ENCODE measurements at regions of chr2 and their contacts with region 1.

Region 1: GRCh38 chr2:231674587-231675338 is 33.6 kb upstream of the PTMA start:
- DNase-seq: no peak
- H3K4me3 ChIP-seq: no peak overlapping the region
- CTCF ChIP-seq: peak; percentile 92

Region 2: DNA sequence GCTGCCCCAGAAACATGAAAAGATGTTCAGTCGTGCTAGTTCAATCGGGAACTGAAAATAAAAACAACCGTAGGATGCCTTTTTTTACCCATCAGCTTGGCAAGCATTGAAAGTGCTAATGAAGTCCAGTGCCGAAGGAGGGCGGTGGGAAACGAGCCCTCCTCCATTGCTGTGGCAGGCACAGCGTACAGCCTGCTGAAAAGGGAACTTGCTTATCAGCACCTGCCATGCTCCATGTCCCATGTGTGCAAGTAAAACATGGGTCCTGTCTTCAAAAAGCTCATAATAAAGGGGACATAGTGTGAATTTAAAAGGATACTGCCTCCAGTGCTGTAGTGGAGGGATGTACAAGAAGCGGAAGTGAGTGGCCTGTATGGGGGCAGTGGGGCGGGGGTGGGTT is 393.9 kb before region 1 on chr2:
- CTCF ChIA-PET with region 1: no interaction called
- POLR2A ChIA-PET with region 1: no interaction called
- DNase-seq: no peak
- H3K4me3 ChIP-seq: no peak overlapping the region
- CTCF ChIP-seq: no peak

Region 3: DNA sequence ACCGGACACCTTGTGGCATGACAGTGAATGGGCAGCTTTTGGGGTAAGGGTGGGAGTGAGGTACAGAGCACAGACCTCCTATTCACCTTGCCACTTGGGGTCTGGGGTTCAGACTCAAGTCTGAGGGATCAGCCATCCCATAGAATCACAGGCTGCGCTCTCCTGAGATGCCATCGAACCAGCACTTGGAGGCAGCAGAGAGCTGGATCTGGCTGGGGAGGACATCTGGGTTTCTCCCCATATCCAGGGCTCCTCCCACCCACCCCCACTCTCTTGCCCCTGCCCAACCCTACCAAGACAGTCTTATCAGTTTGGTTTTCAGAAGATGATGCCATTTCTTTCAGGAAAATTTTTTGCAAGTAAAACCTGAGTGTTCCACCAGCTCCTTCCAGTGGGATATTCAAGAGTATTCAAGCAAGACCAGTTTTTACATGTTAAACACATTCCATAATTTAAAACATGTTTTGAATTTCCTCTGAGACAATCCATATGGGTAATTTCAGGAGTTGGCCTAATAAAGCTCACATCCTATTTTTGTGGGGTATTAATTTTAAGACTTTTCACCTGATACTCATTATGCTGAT is 111.3 kb before region 1 on chr2:
- CTCF ChIA-PET with region 1: interaction called, 14 read pairs
- POLR2A ChIA-PET with region 1: no interaction called
- DNase-seq: no peak
- H3K4me3 ChIP-seq: no peak overlapping the region
- CTCF ChIP-seq: peak; percentile 79

Region 4: DNA sequence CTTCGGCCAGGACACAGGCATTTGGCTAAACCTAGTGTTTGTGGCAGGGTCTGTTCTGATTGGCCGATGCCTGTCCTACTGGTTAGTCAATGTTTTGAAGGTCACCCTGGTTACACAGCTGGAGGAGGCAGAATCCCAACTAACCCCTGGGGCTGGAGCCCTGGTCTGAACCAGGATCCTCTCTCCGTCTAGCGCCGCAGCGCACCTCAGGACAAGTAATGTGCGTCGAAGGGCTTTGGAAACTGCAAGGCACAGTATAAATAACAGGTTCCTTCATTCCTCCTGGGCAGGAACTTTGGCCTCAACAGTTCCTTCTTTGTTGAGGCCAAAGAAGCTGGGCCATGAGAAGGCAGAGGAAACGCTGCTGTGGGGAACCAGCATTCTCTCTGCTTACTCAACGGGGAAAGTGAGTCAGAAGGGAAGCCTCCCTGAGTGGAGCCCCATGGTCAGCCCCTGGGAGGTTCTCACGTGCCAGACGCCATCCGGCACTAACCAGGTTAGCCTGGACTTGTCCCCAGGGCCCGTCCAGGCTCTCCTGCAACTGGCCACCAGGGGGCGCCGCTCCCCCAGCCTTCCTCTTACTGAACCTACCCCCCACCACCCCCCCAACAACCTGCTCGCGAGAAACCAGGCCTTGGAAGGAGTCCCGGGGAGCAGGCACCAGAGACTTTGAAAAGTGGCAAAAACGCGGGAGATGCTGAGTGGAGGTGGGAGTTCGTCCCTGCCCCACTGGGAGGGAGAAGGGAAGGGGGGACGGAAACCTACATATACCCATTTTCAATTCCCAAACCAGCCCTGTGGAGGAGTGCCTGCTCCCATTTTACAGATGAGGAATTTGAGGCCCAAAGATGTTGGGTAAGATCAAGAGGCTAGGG is 62.3 kb before region 1 on chr2:
- CTCF ChIA-PET with region 1: interaction called, 414 read pairs
- POLR2A ChIA-PET with region 1: interaction called, 13 read pairs
- DNase-seq: peak; percentile 71
- H3K4me3 ChIP-seq: no peak overlapping the region
- CTCF ChIP-seq: peak; percentile 87

Region 5: DNA sequence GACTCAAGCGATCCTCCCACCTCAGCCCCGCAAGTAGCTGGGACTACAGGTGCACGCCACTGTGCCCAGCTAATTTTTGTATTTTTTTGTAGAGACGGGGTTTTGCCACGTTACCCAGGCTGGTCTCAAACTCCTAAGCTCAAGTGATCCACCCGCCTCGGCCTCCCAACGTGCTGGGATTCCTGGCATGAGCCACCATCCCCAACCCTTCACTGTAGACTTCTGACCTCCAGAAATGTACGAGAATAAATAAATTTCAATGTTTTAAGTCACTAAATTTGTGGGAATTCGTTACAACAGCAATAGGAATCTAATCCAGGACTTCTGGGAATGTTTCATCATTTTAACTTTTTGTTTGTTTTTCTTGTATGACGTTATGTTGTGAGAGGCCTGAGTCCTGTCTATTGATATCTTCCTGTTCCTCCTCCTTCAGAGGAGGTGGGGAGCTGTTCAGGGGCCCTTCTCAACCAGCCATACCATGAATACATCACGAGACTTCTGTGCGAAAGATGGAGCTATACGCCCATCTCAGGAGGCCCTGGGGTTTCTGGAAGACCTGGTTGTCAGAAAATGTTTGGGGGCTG is 42.1 kb before region 1 on chr2:
- CTCF ChIA-PET with region 1: interaction called, 17 read pairs
- POLR2A ChIA-PET with region 1: no interaction called
- DNase-seq: peak; percentile 83
- H3K4me3 ChIP-seq: no peak overlapping the region
- CTCF ChIP-seq: no peak

Region 6: DNA sequence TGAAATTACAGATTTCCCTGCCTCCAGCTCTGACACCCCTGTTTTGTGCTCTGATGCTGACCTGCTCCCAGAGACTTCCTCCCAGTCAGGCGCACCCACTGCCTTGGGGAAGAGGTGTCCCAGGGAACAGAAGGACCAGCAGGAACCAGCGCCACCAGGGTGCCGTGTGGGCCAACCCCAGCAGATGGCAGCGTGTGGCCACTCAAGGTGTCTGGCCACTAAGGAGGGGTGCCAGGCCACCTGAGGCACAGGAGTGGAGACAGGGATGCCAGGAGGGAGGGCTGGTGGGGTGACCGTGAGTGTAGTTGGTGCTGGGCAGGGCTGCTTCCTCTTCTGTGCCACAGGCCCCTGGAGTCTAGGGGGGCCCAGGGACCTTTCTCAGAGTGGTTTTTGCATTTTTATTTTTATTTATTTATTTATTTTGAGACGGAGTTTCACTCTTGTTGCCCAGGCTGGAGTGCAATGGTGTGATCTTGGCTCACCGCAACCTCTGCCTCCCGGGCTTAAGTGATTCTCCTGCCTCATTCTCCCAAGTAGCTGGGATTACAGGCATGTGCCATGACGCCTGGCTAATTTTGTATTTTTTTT is 26.1 kb before region 1 on chr2:
- CTCF ChIA-PET with region 1: interaction called, 133 read pairs
- POLR2A ChIA-PET with region 1: no interaction called
- DNase-seq: no peak
- H3K4me3 ChIP-seq: no peak overlapping the region
- CTCF ChIP-seq: peak; percentile 87

Region 7: GRCh38 chr2:231706731-231707624 is 32.2 kb after region 1 on chr2:
- CTCF ChIA-PET with region 1: interaction called, 743 read pairs
- POLR2A ChIA-PET with region 1: interaction called, 10 read pairs
- DNase-seq: peak; percentile 90
- H3K4me3 ChIP-seq: peak overlapping the region; percentile 75
- CTCF ChIP-seq: peak; percentile 93

Region 8: DNA sequence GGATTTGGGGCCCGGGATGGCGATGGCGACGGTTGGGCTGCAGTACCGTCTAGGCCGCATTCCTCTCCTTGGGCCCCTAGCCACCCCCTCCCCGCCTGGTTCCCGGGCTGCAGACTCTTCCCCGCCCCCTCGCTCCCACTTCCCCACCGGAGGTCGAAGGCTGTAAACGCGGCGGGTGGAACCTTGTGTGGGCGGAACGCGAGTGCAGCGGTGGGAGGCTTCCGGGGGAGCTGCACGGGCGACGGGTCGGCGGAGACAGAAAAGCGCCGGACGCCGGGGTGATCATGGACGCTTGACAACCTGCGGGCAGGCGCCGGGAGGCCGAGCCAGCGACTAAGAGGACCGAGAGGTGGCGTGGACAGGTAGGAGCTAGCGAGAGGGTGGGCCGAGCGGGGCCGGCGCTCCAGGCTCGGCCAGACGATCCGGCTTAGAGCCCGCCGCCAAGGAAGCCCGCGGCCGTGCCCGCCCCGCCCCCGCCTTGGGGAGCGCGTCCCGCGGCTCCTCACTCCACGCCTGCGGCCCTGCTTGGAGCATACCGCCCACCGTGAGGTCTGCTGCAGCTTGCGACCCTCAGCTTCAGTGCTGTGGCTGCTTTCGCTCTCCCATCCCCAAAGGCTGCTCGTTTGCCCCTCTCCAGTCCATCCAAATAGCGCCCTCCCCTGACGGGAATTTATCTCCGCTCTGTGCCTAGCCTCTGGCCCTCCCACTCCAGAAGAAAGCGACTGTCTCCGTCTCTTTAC is 111.6 kb after region 1 on chr2 and contains the start of gene COPS7B:
- CTCF ChIA-PET with region 1: interaction called, 12 read pairs
- POLR2A ChIA-PET with region 1: interaction called, 3 read pairs
- DNase-seq: no peak
- H3K4me3 ChIP-seq: peak within 1 kb of the TSS; percentile 99
- CTCF ChIP-seq: peak; percentile 56

Region 9: GRCh38 chr2:232525791-232526371 is 851.1 kb after region 1 on chr2 and contains the start of gene CHRND:
- CTCF ChIA-PET with region 1: no interaction called
- POLR2A ChIA-PET with region 1: no interaction called
- DNase-seq: no peak
- H3K4me3 ChIP-seq: no peak within 1 kb of the TSS
- CTCF ChIP-seq: no peak

Region 10: GRCh38 chr2:233584210-233584729 is 1909.5 kb after region 1 on chr2:
- CTCF ChIA-PET with region 1: no interaction called
- POLR2A ChIA-PET with region 1: no interaction called
- DNase-seq: no peak
- H3K4me3 ChIP-seq: no peak overlapping the region
- CTCF ChIP-seq: no peak